Lower leg skin (tissue), 4 donors: ENCODE measurements at regions of chr14 and their contacts with region 1.

Region 1: GRCh38 chr14:89660166-89660565 is 243.1 kb upstream of the FOXN3 start:
- DNase-seq: no peak
- H3K4me3 ChIP-seq: no peak overlapping the region
- CTCF ChIP-seq: no peak
- POLR2A ChIP-seq: no peak

Region 2: DNA sequence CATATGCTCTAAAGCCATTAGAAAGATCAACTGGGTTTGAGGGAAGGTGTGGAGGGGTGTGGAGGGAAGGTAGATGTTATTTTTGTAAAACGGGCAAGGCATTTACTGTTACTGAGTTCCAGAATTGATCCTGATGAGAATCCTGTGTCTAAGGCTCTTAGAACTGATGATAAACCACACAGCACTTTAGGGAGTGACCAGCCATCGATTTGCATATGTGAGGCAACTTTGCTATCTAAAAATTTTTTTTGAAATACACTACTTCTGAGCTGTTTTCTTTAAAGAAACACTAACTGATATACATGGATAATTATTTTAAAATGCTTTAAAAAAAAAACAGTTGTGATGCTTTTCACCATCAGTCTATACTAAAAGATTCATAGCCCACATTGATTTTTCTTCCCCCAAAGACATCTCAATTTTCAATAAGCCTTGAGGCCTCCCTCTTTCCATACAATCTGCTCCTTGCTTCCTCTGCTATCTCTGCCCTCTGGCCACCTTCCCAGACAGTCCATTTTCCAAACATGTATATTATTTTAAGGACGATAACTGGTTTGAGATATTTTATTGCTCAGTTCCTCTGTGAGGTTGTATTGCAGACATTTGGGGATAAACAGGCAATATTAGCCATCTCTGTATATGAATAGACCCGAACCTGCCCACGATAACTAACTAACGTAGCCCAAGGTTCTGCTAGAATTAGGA is 28.5 kb after region 1 on chr14:
- intact Hi-C with region 1: loop called (anchors 1 kb)
- DNase-seq: no peak
- H3K4me3 ChIP-seq: no peak overlapping the region
- CTCF ChIP-seq: no peak
- POLR2A ChIP-seq: no peak